Gastrocnemius medialis (tissue), 4 donors: ENCODE measurements at regions of chr6 and their contacts with region 1.

Region 1: DNA sequence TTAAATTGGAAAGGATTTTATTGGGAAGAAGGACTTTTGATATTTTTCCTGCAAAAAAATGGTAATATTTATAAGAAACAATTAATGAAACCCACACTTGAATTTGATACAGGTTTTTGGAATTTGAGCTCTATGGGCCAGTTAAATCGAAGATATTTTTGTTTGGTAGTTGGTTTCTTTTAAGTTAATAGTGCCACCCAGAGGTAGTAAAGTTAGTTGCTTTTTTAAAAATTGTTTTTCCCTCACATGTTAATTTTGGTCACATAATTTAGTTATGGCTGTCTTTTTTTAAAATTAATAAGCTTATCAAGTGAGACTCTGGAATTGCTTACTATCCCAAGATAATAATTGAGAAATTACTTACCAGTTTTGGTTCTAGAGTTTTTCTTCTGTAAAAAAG is 7.1 kb downstream of the PRIM2 start:
- DNase-seq: no peak
- ATAC-seq: no peak
- H3K4me3 ChIP-seq: no peak overlapping the region
- H3K27ac ChIP-seq: no peak overlapping the region
- H3K4me1 ChIP-seq: no peaks in the 10 kb centered on the region
- H3K27me3 ChIP-seq: no peaks in the 10 kb centered on the region
- CTCF ChIP-seq: peak in 4 of 5 experiments; percentile 18 to 48 (median 36)
- POLR2A ChIP-seq: no peak

Region 2: GRCh38 chr6:56902641-56903464 is 421.7 kb before region 1 on chr6:
- in situ Hi-C with region 1: loop called (anchors 5 to 10 kb)
- intact Hi-C with region 1: loop called (anchors 2 kb)
- DNase-seq: no peak
- ATAC-seq: no peak
- H3K4me3 ChIP-seq: no peak overlapping the region
- H3K27ac ChIP-seq: no peak overlapping the region
- H3K4me1 ChIP-seq: peaks cover 0 to 8% of the 10 kb centered on the region in 2 donors
- H3K27me3 ChIP-seq: no peaks in the 10 kb centered on the region
- CTCF ChIP-seq: peak in 4 of 5 experiments; percentile 29 to 76 (median 59)
- POLR2A ChIP-seq: no peak

Region 3: GRCh38 chr6:57242505-57242904 is 82.0 kb before region 1 on chr6:
- in situ Hi-C with region 1: no loop called
- intact Hi-C with region 1: no loop called
- DNase-seq: no peak
- ATAC-seq: peak; percentile 78 to 85
- H3K4me3 ChIP-seq: no peak overlapping the region
- H3K27ac ChIP-seq: no peak overlapping the region
- H3K4me1 ChIP-seq: no peaks in the 10 kb centered on the region
- H3K27me3 ChIP-seq: no peaks in the 10 kb centered on the region
- CTCF ChIP-seq: no peak
- POLR2A ChIP-seq: no peak

Region 4: GRCh38 chr6:57257911-57258541 is 66.5 kb before region 1 on chr6:
- in situ Hi-C with region 1: no loop called
- intact Hi-C with region 1: no loop called
- DNase-seq: no peak
- ATAC-seq: peak; percentile 13 to 43
- H3K4me3 ChIP-seq: peak overlapping the region; percentile 15 to 27 (median 24)
- H3K27ac ChIP-seq: peak overlapping the region; percentile 42 to 72 (median 62)
- H3K4me1 ChIP-seq: peaks cover 10 to 24% of the 10 kb centered on the region in 2 donors
- H3K27me3 ChIP-seq: no peaks in the 10 kb centered on the region
- CTCF ChIP-seq: no peak
- POLR2A ChIP-seq: peak in 1 of 2 donors; percentile 25